Esophagus squamous epithelium (tissue), 5 donors: ENCODE measurements at regions of chr2 and their contacts with region 1.

Region 1: DNA sequence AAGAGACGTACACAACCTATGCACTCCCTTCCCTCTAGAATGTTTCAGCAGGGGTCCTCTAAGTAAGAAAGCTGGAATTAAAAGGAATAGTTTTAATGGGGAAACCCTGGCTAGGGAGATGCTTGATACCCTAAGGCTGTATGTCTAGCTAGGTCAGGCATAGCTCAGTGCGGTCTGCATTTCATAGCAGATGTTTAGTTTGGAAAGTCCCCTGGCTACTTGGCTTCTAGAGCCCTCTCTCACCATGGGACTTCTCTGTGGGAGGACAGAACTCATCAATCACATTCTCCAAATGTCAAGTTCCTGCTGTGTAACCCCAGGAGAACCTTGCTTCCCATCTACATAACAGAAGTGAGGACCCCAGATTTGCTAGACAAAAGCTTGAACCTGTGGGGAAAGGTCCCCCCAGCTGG is 24.1 kb upstream of the ANXA4 start:
- DNase-seq: no peak
- H3K4me3 ChIP-seq: no peak overlapping the region
- H3K27ac ChIP-seq: no peak overlapping the region
- H3K4me1 ChIP-seq: peaks cover 8 to 34% (median 17%) of the 10 kb centered on the region in 3 donors
- H3K27me3 ChIP-seq: no peaks in the 10 kb centered on the region
- CTCF ChIP-seq: no peak
- POLR2A ChIP-seq: no peak

Region 2: GRCh38 chr2:69386789-69387734 is 330.8 kb before region 1 on chr2 and contains the start of gene GFPT1:
- intact Hi-C with region 1: loop called (anchors 10 kb)
- DNase-seq: peak; percentile 64
- H3K4me3 ChIP-seq: peak within 1 kb of the TSS; percentile 94 to 98 (median 96)
- H3K27ac ChIP-seq: peak within 1 kb of the TSS; percentile 85 to 96 (median 91)
- H3K4me1 ChIP-seq: peaks cover 10 to 52% (median 22%) of the 10 kb centered on the region in 3 donors
- H3K27me3 ChIP-seq: no peaks in the 10 kb centered on the region
- CTCF ChIP-seq: peak in 2 of 6 experiments; percentile 8 to 12
- POLR2A ChIP-seq: peak in 3 of 4 donors; percentile 23 to 92 (median 74)
- total RNA-seq, gene GFPT1: 13.9 to 25.8 (median 19.5) TPM

Region 3: GRCh38 chr2:69565431-69565839 is 152.4 kb before region 1 on chr2:
- intact Hi-C with region 1: loop called (anchors 5 kb)
- DNase-seq: no peak
- H3K4me3 ChIP-seq: no peak overlapping the region
- H3K27ac ChIP-seq: no peak overlapping the region
- H3K4me1 ChIP-seq: peaks cover 4 to 41% (median 7%) of the 10 kb centered on the region in 3 donors
- H3K27me3 ChIP-seq: no peaks in the 10 kb centered on the region
- CTCF ChIP-seq: peak; percentile 42 to 72 (median 57)
- POLR2A ChIP-seq: no peak

Region 4: GRCh38 chr2:69643602-69644505 is 74.0 kb before region 1 on chr2 and contains the start of gene AAK1:
- intact Hi-C with region 1: loop called (anchors 10 kb)
- DNase-seq: peak; percentile 24
- H3K4me3 ChIP-seq: peak within 1 kb of the TSS; percentile 85 to 97 (median 92)
- H3K27ac ChIP-seq: peak within 1 kb of the TSS; percentile 92 to 96 (median 94)
- H3K4me1 ChIP-seq: peaks cover 26 to 78% (median 31%) of the 10 kb centered on the region in 3 donors
- H3K27me3 ChIP-seq: no peaks in the 10 kb centered on the region
- CTCF ChIP-seq: peak in 2 of 6 experiments; percentile 5 to 18
- POLR2A ChIP-seq: peak in 3 of 4 donors; percentile 25 to 90 (median 85)
- total RNA-seq, gene AAK1: 28.0 to 35.5 (median 32.8) TPM